ENCODE measurements at regions of chr20 and their contacts with region 1.

Region 1: GRCh38 chr20:21303061-21303871 is at the start of gene XRN2:
- DNase-seq: peak; percentile 95
- H3K4me3 Mint-ChIP-seq: peak within 1 kb of the TSS; percentile 88
- H3K27ac Mint-ChIP-seq: peak within 1 kb of the TSS; percentile 97
- H3K4me1 Mint-ChIP-seq: peaks cover 29% of the 10 kb centered on the region
- H3K27me3 Mint-ChIP-seq: peaks cover 4% of the 10 kb centered on the region
- total RNA-seq, gene XRN2: 68.0 to 70.4 TPM

Region 2: DNA sequence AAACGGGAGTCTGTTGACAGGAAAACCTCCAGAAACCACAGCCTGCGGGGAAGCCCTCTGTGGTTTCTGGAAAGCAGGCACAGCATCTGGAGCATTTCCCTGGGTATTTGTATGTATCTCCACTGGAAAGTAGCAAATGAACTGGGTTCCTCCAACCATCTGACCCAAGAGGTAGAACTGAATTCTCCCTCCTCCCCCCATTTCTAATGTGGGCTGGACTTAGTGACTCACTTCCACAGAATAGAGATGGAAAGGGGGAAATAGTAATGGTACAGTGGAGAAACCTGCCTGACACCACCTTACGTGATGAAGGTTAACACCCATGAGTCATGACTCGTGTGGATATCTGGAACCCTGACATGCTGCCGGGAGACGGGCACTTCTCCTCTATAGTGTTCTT is 52.0 kb before region 1 on chr20:
- CTCF ChIA-PET with region 1: no interaction called
- POLR2A ChIA-PET with region 1: no interaction called
- DNase-seq: no peak
- H3K4me3 Mint-ChIP-seq: no peak overlapping the region
- H3K27ac Mint-ChIP-seq: no peak overlapping the region
- H3K4me1 Mint-ChIP-seq: no peaks in the 10 kb centered on the region
- H3K27me3 Mint-ChIP-seq: no peaks in the 10 kb centered on the region

Region 3: DNA sequence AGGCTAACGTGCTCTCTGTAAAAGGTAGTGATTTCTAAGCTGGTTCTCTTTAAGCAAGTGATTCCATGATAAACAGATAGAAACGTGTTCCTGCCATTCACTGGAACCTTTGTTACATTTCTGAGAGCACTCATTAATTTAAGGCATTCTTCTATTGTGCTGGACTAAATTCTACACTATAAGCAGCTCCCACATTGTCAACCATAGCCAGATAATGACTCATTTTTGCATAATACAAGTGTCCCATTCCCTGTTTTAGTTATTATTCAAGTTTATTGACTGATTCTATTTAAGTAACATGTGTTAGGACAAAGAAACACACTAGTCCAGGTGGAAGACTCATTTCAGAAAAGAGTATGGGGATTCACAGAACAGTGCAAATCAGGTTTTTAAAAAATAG is 13.6 kb before region 1 on chr20:
- CTCF ChIA-PET with region 1: no interaction called
- POLR2A ChIA-PET with region 1: interaction called, 10 read pairs
- DNase-seq: no peak
- H3K4me3 Mint-ChIP-seq: no peak overlapping the region
- H3K27ac Mint-ChIP-seq: no peak overlapping the region
- H3K4me1 Mint-ChIP-seq: no peaks in the 10 kb centered on the region
- H3K27me3 Mint-ChIP-seq: peaks cover 15% of the 10 kb centered on the region

Region 4: GRCh38 chr20:21323640-21324039 is 20.4 kb after region 1 on chr20:
- CTCF ChIA-PET with region 1: interaction called, 3 read pairs
- POLR2A ChIA-PET with region 1: interaction called, 21 read pairs
- DNase-seq: no peak
- H3K4me3 Mint-ChIP-seq: no peak overlapping the region
- H3K27ac Mint-ChIP-seq: no peak overlapping the region
- H3K4me1 Mint-ChIP-seq: peaks cover 40% of the 10 kb centered on the region
- H3K27me3 Mint-ChIP-seq: no peaks in the 10 kb centered on the region

Measured in activated CD4-positive, alpha-beta memory T cell treated with anti-CD3 and anti-CD28 coated beads, Interleukin-2, amount 10 ng/mL, durations not matched to agents 7 days and 5 days (primary cell).